H1 (cell line): ENCODE measurements at regions of chr1 and their contacts with region 1.

Region 1: DNA sequence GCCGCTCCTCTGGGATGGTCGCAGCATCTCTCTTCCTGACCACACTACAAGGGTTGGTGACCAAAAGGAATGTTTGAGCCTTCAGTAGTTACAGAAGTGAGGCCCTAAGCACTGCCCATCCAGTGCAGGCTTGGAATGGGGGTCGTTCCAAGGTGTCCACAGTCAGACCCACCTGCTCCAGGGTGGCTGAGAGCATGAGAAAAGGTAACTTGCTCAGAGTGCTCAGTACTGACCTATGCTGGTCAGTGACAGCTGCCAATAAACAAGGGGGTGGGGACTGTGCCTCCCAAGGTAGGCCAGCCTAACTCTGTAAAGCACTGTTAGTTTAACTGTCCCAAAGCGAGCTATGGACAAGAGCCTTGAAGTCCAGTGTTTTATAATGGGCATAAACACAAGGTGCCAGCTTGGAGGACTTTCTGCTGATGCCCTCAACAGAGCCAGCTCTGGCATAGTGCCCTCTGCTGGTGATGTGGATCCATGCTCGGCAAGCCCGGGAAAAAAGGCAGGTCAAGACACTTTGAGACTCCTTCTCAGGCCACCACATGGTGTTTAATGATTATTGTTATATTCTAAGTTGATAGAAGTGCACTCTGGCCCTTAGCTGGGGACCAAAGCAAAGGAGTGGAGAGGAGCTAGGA is 78.1 kb upstream of the DNAH14 start:
- DNase-seq: peak in 1 of 2 experiments; percentile 91
- H3K4me3 ChIP-seq: no peak overlapping the region
- H3K27ac ChIP-seq: no peak overlapping the region
- H3K4me1 ChIP-seq: peaks cover 3 to 8% (median 5%) of the 10 kb centered on the region in 4 experiments
- H3K27me3 ChIP-seq: no peaks in the 10 kb centered on the region
- CTCF ChIP-seq: peak; percentile 81 to 93 (median 87)
- EP300 ChIP-seq: no peak
- POLR2A ChIP-seq: no peak
- RAD21 ChIP-seq: peak; percentile 80 to 83

Region 2: DNA sequence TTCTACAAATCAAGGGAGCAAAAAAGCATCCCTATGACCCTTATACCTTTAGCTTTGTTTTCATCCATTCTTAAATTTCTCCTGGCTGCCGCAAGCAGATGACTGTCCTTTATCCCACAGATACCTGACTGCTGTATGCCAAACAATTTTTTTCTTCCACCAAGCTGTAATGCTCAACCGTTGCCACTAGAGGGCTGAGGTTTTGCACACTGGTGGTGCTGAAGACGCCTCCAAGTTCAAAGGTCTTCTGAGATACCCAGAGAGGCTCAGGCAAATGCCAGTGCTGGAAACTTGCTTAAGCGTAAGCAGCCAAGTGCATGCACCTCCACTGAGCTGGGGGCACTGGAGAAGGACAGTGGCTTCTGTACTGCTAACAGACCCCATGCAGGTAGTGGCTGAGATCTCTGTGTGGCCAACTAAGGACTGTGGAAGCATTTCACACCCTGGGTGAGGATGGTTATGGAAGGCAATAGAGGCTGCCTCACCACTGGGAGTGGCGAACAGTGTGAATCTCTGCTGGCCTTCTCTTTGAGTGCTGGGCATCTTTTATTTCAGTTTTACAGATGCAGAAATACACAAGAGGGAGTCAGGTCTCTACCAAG is 206.7 kb before region 1 on chr1:
- CTCF ChIA-PET with region 1: interaction called, 69 read pairs
- POLR2A ChIA-PET with region 1: no interaction called
- DNase-seq: peak; percentile 41 to 79
- H3K4me3 ChIP-seq: no peak overlapping the region
- H3K27ac ChIP-seq: no peak overlapping the region
- H3K4me1 ChIP-seq: no peaks in the 10 kb centered on the region
- H3K27me3 ChIP-seq: no peaks in the 10 kb centered on the region
- CTCF ChIP-seq: peak; percentile 61 to 88 (median 87)
- EP300 ChIP-seq: no peak
- POLR2A ChIP-seq: no peak
- RAD21 ChIP-seq: peak; percentile 82 to 86

Region 3: DNA sequence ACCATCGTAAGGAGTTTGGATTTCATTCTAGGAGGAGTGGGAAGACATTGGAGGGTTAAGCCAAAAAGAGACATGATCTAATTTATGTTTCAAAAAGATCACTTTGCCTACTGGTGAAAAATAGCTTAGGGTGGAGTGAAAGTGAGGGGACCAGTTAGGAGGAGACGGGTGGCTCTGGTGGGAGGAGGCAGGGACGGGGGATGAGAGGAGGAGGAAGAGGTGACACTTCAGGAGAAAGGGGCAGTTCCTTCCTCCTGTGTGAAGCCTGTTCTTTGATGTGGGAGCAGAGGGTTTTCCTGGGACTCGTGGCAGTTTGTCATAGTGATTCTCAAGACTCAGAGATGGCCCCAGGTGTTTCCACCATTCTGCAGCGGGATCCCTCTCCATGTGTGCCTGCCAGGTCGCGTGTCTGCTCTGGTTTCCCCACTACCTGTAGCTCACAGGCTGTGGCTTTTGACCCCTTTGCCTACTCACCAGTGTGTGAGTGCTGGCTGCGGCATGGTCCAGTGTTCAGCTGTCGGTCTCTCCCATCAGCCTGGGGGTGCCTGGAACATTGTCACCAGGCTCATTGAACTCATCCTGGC is 132.8 kb before region 1 on chr1:
- CTCF ChIA-PET with region 1: interaction called, 20 read pairs
- POLR2A ChIA-PET with region 1: no interaction called
- DNase-seq: no peak
- H3K4me3 ChIP-seq: no peak overlapping the region
- H3K27ac ChIP-seq: no peak overlapping the region
- H3K4me1 ChIP-seq: 0 out of 7 replicates have a peak, but pooled peaks cover 0 to 3% (median 0%) of the 10 kb centered on the region in 4 experiments
- H3K27me3 ChIP-seq: no peaks in the 10 kb centered on the region
- CTCF ChIP-seq: no peak
- EP300 ChIP-seq: no peak
- POLR2A ChIP-seq: no peak
- RAD21 ChIP-seq: no peak

Region 4: GRCh38 chr1:224811564-224811963 is 39.8 kb before region 1 on chr1:
- CTCF ChIA-PET with region 1: interaction called, 21 read pairs
- POLR2A ChIA-PET with region 1: no interaction called
- DNase-seq: no peak
- H3K4me3 ChIP-seq: no peak overlapping the region
- H3K27ac ChIP-seq: no peak overlapping the region; the same call in 1 of the 2 replicates
- H3K4me1 ChIP-seq: no peaks in the 10 kb centered on the region
- H3K27me3 ChIP-seq: no peaks in the 10 kb centered on the region
- CTCF ChIP-seq: no peak
- EP300 ChIP-seq: no peak
- POLR2A ChIP-seq: no peak
- RAD21 ChIP-seq: no peak

Region 5: DNA sequence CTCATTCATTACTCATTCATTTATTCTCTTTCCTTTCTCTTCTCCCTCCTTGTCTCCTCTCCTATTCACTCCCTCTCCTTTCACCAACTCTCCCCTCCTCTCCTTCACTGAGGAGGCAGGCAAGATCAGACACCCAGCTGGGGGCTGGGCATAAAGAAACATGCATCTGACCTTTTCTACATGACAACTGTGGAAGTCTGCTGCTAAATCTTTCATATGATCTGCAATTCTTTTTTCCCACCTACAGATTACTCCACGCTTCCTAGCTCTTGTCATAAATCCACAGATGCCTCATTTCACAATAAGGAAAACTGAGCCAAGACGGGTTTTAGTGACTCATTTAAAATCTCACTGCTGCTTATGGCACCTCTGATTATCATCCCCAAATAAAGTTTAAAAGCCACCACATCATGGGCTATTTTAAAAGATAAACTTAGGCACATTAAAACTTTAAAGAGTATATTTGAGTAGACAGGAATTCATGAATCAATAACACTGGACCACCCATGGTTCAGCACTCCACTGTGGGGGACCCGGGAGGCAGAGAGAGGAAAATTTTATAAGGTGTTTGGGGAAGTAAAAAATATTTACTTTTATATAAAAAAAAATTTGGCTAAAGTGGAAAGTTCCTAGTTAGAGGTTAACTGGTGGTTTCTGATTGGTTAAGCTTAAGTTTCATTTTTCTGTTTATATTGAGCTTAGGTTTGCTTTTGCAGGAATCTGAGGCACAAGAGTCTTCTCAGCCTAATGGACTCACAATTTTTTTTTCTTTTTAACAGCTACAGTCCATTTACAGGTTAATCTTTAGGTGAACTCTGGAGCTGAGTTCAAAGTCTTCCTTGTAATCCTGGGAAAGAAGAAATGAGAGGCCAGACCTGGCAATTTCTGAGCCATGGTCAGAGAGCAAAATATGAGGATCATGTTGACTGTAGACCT is 22.4 kb after region 1 on chr1:
- CTCF ChIA-PET with region 1: interaction called, 60 read pairs
- POLR2A ChIA-PET with region 1: interaction called, 4 read pairs
- DNase-seq: no peak
- H3K4me3 ChIP-seq: no peak overlapping the region
- H3K27ac ChIP-seq: no peak overlapping the region
- H3K4me1 ChIP-seq: peaks cover 0 to 16% (median 10%) of the 10 kb centered on the region in 4 experiments; a peak in 6 of 7 replicates
- H3K27me3 ChIP-seq: no peaks in the 10 kb centered on the region
- CTCF ChIP-seq: no peak
- EP300 ChIP-seq: no peak
- POLR2A ChIP-seq: no peak
- RAD21 ChIP-seq: no peak

Region 6: GRCh38 chr1:224922404-224923164 is 71.3 kb after region 1 on chr1:
- CTCF ChIA-PET with region 1: interaction called, 21 read pairs
- POLR2A ChIA-PET with region 1: no interaction called
- DNase-seq: peak in 1 of 2 experiments; percentile 54
- H3K4me3 ChIP-seq: no peak overlapping the region
- H3K27ac ChIP-seq: no peak overlapping the region
- H3K4me1 ChIP-seq: 0 out of 7 replicates have a peak, but pooled peaks cover 0 to 2% (median 0%) of the 10 kb centered on the region in 4 experiments
- H3K27me3 ChIP-seq: no peaks in the 10 kb centered on the region
- CTCF ChIP-seq: peak in 2 of 3 experiments; percentile 61 to 79; a peak in 3 of 4 replicates
- EP300 ChIP-seq: no peak
- POLR2A ChIP-seq: no peak
- RAD21 ChIP-seq: peak; percentile 91 to 93